Lower leg skin (tissue), 4 donors: ENCODE measurements at regions of chr16 and their contacts with region 1.

Region 1: GRCh38 chr16:58018804-58019203 is 6.8 kb upstream of the MMP15 start:
- DNase-seq: no peak
- H3K4me3 ChIP-seq: no peak overlapping the region
- CTCF ChIP-seq: no peak
- POLR2A ChIP-seq: no peak

Region 2: DNA sequence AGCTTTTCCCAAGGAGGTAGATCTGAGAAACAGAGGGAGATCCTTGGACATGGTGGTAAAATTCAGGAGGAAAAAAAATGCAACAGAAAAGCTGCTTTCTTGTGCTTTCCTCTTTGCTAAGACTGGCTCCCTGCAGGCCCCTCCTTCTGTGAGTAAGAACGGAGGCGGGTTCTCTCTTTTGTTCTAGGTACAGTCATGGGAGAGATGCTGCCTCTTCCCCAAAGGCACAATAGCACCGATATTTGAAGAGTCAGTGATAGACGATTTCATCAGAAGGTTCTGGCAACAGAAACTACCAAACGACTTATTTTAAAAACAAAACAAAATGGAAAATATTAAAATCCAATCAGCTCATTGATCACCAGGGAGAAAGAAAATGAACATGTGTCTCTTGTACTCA is 183.9 kb before region 1 on chr16:
- intact Hi-C with region 1: no loop called
- DNase-seq: no peak
- H3K4me3 ChIP-seq: no peak overlapping the region
- CTCF ChIP-seq: no peak
- POLR2A ChIP-seq: no peak

Region 3: DNA sequence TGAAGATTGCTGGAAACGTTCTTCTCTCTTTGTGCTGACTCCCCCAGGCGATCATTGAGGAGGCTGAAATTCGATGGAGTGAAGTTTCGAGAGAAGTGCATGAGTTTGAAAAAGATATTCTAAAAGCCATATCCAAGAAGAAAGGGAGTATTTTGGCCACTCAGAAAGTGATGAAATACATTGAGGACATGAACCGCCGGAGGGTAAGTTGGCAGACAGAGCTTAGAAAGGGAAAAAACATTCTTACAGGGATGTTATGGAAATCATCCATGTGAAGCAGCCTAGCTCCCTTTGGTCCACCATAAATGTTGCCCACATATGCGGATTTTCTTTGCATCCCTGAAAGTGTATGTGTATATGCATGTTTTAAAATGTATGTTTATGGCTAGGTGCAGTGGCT is 239.5 kb after region 1 on chr16:
- intact Hi-C with region 1: loop called (anchors 5 kb)
- DNase-seq: no peak
- H3K4me3 ChIP-seq: no peak overlapping the region
- CTCF ChIP-seq: no peak
- POLR2A ChIP-seq: no peak